H1 (cell line): ENCODE measurements at regions of chr6 and their contacts with region 1.

Region 1: DNA sequence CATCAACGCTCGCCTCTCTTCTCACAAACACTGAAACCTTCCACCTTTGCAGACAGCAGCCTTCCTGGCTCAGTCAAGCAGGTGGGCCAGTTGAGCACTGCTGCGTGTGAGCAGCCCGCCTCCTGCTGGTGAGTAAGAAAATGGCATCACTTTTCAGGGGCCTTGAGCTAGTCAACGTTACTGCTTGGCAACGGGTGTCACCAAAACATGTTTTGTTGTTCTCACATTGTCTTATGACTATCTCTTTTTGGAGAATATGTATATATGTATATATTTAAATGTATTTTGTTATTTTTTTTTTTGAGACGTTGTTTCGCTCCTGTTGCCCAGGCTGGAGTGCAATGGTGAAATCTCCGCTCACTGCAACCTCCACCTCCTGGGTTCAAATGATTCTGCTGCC is 97.0 kb upstream of the AGPAT4 start:
- DNase-seq: peak; percentile 41 to 73
- H3K4me3 ChIP-seq: no peak overlapping the region
- H3K27ac ChIP-seq: no peak overlapping the region
- H3K4me1 ChIP-seq: no peaks in the 10 kb centered on the region; a peak in 2 of 7 replicates
- H3K27me3 ChIP-seq: no peaks in the 10 kb centered on the region
- CTCF ChIP-seq: peak; percentile 91 to 97 (median 93)
- EP300 ChIP-seq: no peak
- POLR2A ChIP-seq: no peak
- RAD21 ChIP-seq: peak; percentile 97 to 99

Region 2: DNA sequence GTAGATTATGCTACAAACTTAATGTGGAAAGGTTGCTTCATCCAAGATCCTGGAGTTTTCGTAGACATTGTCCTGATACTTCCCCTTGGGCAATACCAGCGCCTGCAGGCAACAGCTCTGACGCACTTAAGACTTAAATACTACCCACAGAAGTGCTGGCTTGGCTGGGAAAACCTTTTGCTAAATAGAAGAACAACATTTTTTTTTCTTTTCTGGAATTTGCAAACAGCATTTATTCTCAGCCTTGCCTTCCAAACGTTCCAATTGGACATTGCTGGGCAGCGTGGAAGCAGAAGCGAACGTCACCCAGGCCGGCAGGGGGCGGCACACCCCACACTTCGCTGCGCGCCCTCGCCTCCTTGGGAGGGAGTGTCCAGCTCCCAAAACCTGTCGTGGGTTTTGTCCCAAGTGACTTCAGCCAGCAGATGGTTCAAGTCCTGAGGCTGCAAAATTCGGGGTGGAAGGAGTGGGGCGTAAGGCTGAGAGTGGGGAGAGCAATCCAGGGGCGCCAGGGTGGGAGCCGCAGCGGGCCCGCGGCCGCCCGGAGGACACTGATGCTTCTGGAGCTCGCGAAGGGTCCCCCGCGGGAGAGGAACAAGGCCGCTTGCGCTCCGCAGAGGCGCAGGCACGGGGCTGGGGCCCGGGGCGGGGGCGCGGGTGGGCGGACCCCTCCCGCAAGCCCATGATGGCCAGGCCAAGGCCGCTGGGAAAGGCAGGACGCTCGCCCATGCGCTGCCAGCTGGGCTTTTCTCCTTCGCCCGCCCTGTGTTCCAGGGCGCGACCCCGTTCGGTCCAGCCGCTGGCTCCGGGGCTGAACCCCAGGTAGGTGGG is 440.1 kb before region 1 on chr6:
- CTCF ChIA-PET with region 1: interaction called, 46 read pairs
- POLR2A ChIA-PET with region 1: no interaction called
- DNase-seq: peak in 1 of 2 experiments; percentile 90
- H3K4me3 ChIP-seq: peak overlapping the region; percentile 17 to 77 (median 60)
- H3K27ac ChIP-seq: no peak overlapping the region
- H3K4me1 ChIP-seq: peaks cover 0 to 3% (median under 1%) of the 10 kb centered on the region in 4 experiments; a peak in 6 of 7 replicates
- H3K27me3 ChIP-seq: peaks cover 0 to 8% (median 6%) of the 10 kb centered on the region in 4 experiments; a peak in 3 of 7 replicates
- CTCF ChIP-seq: peak; percentile 78 to 98 (median 85)
- EP300 ChIP-seq: no peak
- POLR2A ChIP-seq: no peak
- RAD21 ChIP-seq: peak; percentile 85 to 88

Region 3: GRCh38 chr6:161111261-161111660 is 259.6 kb before region 1 on chr6:
- CTCF ChIA-PET with region 1: interaction called, 26 read pairs
- POLR2A ChIA-PET with region 1: no interaction called
- DNase-seq: no peak
- H3K4me3 ChIP-seq: no peak overlapping the region
- H3K27ac ChIP-seq: no peak overlapping the region
- H3K4me1 ChIP-seq: no peaks in the 10 kb centered on the region
- H3K27me3 ChIP-seq: no peaks in the 10 kb centered on the region
- CTCF ChIP-seq: no peak
- EP300 ChIP-seq: no peak
- POLR2A ChIP-seq: no peak
- RAD21 ChIP-seq: no peak

Region 4: DNA sequence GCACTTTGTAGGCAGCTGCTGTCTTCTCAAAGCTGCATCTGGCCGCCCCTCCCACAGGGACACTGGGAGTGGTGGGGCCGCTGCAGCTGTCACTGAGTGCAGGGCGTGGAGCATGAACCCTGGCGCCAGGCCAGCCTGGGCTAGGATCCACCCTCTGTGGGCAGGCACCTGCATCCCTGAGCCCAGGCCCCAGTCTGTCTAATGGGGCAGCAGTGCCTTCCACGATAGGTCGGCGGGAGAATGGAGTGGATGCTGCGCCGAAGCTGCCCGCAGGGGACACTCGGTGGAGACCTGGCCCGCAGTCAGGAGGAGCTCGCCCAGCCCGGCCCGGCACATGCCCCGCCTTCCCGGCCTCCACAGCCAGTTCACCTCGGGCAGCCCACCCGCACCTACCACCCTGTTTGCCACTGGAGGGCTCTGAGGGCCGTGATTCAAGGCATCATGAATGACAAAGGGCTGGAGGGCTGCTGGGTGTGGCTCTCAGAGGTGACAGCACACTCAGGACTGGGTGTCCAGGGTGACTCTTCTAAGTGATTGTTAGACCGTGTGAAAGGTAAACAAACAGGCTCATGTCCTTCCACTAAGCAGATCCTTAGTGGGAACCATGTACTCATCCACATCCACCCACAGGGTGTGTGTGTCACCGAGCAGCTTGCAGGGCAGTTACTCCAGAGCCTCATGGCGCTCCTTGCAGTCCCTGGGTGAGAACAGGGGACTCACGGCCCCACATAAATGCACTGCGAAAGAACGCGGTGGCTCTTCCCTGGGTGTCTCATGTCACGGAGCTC is 230.9 kb before region 1 on chr6:
- CTCF ChIA-PET with region 1: interaction called, 77 read pairs
- POLR2A ChIA-PET with region 1: no interaction called
- DNase-seq: peak in 1 of 2 experiments; percentile 48
- H3K4me3 ChIP-seq: no peak overlapping the region
- H3K27ac ChIP-seq: no peak overlapping the region
- H3K4me1 ChIP-seq: no peaks in the 10 kb centered on the region; a peak in 1 of 7 replicates
- H3K27me3 ChIP-seq: no peaks in the 10 kb centered on the region
- CTCF ChIP-seq: peak in 2 of 3 experiments; percentile 4 to 9; a peak in 3 of 4 replicates
- EP300 ChIP-seq: no peak
- POLR2A ChIP-seq: no peak; a peak in 1 of 3 replicates
- RAD21 ChIP-seq: peak; percentile 41 to 48; a peak in 3 of 4 replicates

Region 5: GRCh38 chr6:161161889-161162624 is 208.8 kb before region 1 on chr6:
- CTCF ChIA-PET with region 1: interaction called, 15 read pairs
- POLR2A ChIA-PET with region 1: no interaction called
- DNase-seq: no peak
- H3K4me3 ChIP-seq: no peak overlapping the region
- H3K27ac ChIP-seq: no peak overlapping the region
- H3K4me1 ChIP-seq: peaks cover 0 to 10% (median 4%) of the 10 kb centered on the region in 4 experiments; a peak in 5 of 7 replicates
- H3K27me3 ChIP-seq: no peaks in the 10 kb centered on the region
- CTCF ChIP-seq: no peak
- EP300 ChIP-seq: no peak
- POLR2A ChIP-seq: no peak
- RAD21 ChIP-seq: no peak

Region 6: GRCh38 chr6:161242779-161243693 is 127.8 kb before region 1 on chr6:
- CTCF ChIA-PET with region 1: interaction called, 10 read pairs
- POLR2A ChIA-PET with region 1: no interaction called
- DNase-seq: peak; percentile 57 to 79
- H3K4me3 ChIP-seq: peak overlapping the region in 1 of 4 experiments; percentile 11; a peak in 2 of 8 replicates
- H3K27ac ChIP-seq: no peak overlapping the region
- H3K4me1 ChIP-seq: peaks cover 2 to 21% (median 7%) of the 10 kb centered on the region in 4 experiments; a peak in 5 of 7 replicates
- H3K27me3 ChIP-seq: no peaks in the 10 kb centered on the region
- CTCF ChIP-seq: peak in 2 of 3 experiments; percentile 9 to 31; a peak in 2 of 4 replicates
- EP300 ChIP-seq: no peak
- POLR2A ChIP-seq: no peak
- RAD21 ChIP-seq: peak in 1 of 2 experiments; percentile 19; a peak in 2 of 4 replicates

Region 7: DNA sequence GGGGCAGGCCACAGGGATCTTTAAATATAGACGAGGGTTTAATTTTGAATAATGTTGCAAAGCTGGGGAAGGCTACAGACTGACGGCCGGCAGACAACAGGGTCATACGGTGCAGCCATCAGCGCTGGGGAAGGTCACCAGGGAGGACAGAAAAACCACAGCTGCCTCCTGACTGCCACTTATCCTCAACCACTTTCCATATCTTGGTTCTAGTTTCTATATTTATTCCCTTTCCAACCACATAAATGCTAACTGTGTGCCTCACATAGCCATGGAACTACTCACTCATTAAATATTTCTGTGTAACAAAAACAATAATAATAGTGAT is 11.3 kb before region 1 on chr6:
- CTCF ChIA-PET with region 1: interaction called, 113 read pairs
- POLR2A ChIA-PET with region 1: no interaction called
- DNase-seq: no peak
- H3K4me3 ChIP-seq: no peak overlapping the region
- H3K27ac ChIP-seq: no peak overlapping the region
- H3K4me1 ChIP-seq: no peaks in the 10 kb centered on the region; a peak in 1 of 7 replicates
- H3K27me3 ChIP-seq: no peaks in the 10 kb centered on the region
- CTCF ChIP-seq: no peak
- EP300 ChIP-seq: no peak
- POLR2A ChIP-seq: no peak
- RAD21 ChIP-seq: no peak

Region 8: DNA sequence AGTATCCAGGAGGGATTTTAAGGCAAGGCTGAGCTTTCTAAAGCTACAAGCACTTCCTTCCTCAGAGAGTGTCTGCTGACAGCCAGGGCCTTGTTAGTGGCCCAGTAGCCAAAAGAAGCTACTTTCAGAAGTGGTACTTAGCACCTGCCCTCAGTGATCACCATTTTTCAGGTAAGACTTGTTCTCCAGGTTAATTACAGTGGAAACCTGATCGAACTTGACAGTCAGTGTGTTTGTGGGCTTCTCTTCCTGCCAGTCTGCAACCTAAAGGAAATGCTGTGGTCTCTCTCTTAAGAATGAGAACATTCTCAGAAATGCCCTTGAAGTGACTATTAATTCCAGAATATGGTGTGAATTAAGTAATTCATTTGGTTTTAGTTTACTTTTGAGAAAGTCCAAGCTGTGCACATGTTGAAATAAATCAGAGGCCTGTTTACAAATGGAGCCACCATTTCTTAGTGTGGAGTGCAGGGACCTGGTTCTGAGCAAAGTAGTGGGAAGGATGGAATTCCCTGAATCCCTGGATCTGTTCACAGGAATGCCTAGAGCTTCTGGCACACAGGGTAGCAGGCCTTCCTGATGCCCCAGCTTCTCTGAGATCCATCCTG is 88.2 kb after region 1 on chr6:
- CTCF ChIA-PET with region 1: no interaction called
- POLR2A ChIA-PET with region 1: no interaction called
- DNase-seq: no peak
- H3K4me3 ChIP-seq: no peak overlapping the region
- H3K27ac ChIP-seq: no peak overlapping the region
- H3K4me1 ChIP-seq: no peaks in the 10 kb centered on the region
- H3K27me3 ChIP-seq: no peaks in the 10 kb centered on the region
- CTCF ChIP-seq: no peak
- EP300 ChIP-seq: no peak
- POLR2A ChIP-seq: no peak
- RAD21 ChIP-seq: no peak